A673 (cell line): ENCODE measurements at regions of chr3 and their contacts with region 1.

Region 1: GRCh38 chr3:108959017-108959416 is 5.3 kb upstream of the GUCA1C start:
- DNase-seq: no peak
- H3K4me3 ChIP-seq: no peak overlapping the region
- H3K27ac ChIP-seq: no peak overlapping the region
- H3K4me1 ChIP-seq: no peaks in the 10 kb centered on the region
- H3K27me3 ChIP-seq: no peaks in the 10 kb centered on the region
- CTCF ChIP-seq: no peak

Region 2: GRCh38 chr3:110234831-110235230 is 1275.8 kb after region 1 on chr3:
- CTCF ChIA-PET with region 1: no interaction called
- POLR2A ChIA-PET with region 1: no interaction called
- intact Hi-C with region 1: no loop called
- DNase-seq: no peak
- H3K4me3 ChIP-seq: no peak overlapping the region
- H3K27ac ChIP-seq: no peak overlapping the region
- H3K4me1 ChIP-seq: no peaks in the 10 kb centered on the region
- H3K27me3 ChIP-seq: no peaks in the 10 kb centered on the region
- CTCF ChIP-seq: no peak

Region 3: DNA sequence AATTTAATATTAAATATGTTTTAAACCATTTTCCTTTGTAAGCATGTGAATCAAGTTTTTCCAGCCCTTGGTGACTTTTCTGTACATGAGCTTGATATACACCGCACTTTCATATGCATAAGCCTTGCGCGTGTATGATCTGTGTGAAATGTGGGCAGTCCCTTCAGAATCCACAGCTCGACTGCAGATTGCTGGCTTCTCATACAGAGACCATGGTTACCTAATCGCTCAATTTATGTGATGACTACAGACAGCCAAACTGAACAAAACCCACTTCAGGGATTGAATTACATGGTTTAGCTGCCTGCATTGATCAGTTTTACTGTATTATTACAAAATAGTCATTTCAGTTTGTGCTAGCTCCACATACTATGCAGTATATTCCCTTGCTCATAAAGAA is 1900.3 kb after region 1 on chr3:
- CTCF ChIA-PET with region 1: no interaction called
- POLR2A ChIA-PET with region 1: interaction called, 11 read pairs
- intact Hi-C with region 1: no loop called
- DNase-seq: no peak
- H3K4me3 ChIP-seq: no peak overlapping the region
- H3K27ac ChIP-seq: no peak overlapping the region
- H3K4me1 ChIP-seq: no peaks in the 10 kb centered on the region
- H3K27me3 ChIP-seq: no peaks in the 10 kb centered on the region
- CTCF ChIP-seq: no peak